ENCODE measurements at regions of chr19 and their contacts with region 1.

Region 1: DNA sequence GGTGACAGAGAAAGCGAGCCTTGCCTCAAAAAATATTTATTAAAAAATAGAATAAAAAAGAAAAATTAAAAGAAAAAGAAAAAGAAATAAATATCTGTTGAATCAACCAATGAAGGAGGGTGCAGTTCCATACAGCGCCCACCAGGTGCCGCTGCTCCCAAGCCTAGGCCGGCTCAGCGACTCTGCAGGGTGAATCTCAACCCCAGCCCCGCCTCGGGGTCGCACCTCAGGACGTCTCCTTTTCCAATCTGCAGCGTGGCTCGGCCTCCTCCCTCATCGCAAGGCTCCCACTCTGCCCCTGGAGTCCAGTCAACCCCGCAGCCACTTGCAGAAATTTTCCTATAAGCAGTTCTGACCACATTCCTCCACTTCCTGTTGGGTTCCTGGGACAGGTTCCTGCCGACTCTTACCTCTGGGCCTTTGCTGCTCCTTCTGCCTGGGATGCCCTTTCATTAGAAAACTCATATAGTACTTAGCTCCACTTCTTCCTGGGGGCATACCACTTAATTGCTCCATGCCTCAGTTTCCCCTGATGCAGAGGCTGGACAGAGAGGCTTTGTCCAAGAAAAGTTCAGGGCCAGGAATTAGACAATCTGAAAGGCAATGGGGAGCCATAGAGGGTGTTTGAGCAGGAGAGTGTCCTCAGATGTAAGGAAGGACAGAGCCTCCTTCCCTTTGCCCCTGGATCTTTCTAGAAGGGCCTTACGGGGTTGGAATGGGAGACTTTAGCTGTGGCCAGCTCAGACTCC is 24.3 kb downstream of the NFILZ start:
- DNase-seq: peak; percentile 35 to 64
- ATAC-seq: peak in 1 of 4 donors; percentile 53
- H3K4me3 ChIP-seq: no peak overlapping the region
- H3K27ac ChIP-seq: no peak overlapping the region
- H3K4me1 ChIP-seq: no peaks in the 10 kb centered on the region
- H3K27me3 ChIP-seq: peaks cover 0 to 8% (median 0%) of the 10 kb centered on the region in 3 donors
- CTCF ChIP-seq: peak; percentile 81

Region 2: DNA sequence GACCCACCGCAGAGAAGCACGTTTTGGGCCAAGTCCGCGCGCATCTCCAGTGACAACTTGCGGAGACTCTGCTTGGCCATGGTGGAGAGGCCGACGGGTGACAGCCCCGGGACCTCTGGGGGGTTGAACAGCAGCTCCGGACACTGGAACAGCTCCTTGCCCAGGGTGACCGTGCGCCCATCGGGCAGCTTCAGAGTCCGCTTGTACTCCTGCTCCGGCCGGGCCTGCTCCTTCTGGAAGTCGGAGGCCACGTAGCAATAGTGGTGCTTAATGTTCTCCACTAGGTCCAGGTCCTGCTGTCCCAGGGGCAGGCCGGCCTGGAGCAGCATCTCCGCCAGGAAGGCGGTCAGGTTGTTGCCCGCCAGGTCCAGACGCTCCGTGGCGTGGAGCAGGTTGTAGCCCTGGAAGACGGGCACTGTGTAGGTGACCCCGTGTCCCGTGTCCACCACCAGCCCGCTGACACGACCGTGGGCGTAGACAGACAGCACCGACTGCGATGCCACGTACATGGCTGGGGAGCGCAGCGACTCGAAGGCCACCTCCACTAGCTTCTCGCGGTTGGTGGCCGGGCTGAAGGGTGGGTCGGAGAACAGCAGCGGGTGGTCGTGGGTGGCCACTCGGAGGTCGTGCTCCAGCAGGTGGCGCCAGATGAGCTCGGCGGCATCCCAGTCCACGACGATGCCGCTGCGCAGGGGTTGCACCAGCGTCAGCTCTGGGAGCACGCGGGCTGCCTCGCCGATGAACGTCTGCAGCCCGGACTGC is 43.1 kb after region 1 on chr19:
- intact Hi-C with region 1: loop called in 1 of 2 experiments (anchors 2 kb)
- DNase-seq: no peak
- ATAC-seq: no peak
- H3K4me3 ChIP-seq: no peak overlapping the region
- H3K27ac ChIP-seq: no peak overlapping the region
- H3K4me1 ChIP-seq: no peaks in the 10 kb centered on the region
- H3K27me3 ChIP-seq: no peaks in the 10 kb centered on the region
- CTCF ChIP-seq: no peak

Region 3: DNA sequence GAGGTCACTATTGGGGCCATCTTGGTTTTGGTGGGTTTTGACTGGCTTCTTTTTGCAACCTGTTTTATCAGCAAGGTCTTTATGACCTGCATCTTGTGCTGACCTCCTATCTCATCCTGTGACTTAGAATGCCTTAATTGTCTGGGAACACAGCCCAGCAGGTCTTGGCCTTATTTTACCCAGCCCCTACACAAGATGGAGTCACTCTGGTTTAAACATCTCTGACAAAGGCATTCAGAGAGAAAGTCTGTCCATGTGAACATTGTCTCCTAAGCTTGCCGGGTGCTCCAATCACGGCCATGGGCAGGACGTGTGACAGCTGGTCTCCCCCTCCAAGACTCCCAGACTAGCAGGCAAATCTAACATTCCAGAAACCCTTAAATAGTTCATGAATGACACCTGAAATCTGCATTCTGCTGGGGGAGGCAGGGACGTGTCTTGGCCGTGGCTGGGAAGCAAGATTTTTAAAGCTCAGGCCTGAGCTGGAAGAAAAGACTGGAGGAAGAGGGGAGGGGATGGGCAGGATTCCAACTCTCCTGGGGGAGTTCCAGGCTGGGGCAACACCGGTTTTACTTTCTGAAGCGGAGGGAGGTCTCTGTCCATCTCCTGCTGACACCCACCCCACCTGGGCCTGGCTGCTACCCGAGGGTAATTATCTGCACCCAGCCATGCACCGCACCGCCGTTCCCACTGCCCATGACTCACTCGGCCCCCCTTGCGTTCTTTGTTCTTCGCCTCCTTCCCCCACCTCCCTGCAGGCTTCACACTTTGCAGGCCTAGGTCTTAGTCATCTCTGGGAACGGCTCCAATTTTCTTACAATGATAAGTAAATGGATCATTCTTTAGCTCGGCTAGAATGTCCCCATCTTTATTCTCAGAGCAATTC is 420.5 kb after region 1 on chr19:
- intact Hi-C with region 1: loop called in 1 of 2 experiments (anchors 5 kb)
- DNase-seq: peak; percentile 51 to 54
- ATAC-seq: peak in 1 of 4 donors; percentile 46
- H3K4me3 ChIP-seq: no peak overlapping the region
- H3K27ac ChIP-seq: no peak overlapping the region
- H3K4me1 ChIP-seq: no peaks in the 10 kb centered on the region
- H3K27me3 ChIP-seq: no peaks in the 10 kb centered on the region
- CTCF ChIP-seq: no peak